ENCODE measurements at regions of chr9 and their contacts with region 1.

Region 1: DNA sequence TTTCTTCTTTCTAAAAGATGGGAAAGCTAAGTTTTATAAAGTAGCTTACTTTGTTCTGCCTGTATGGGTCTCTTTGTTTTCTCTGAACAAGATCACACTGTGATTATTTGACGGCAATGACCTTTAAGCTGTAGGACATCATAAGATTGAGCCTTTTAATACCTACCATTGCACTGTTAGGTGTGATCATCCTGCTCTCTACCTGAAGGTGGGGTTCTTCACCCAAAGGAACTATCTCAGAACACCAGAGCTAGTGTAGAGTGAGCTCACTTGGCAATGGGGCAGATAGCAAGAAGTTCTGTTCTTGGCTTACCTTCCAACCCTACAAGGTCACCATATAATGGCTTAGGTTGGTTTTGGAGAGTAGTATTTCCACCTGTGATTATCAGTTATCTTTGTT is 200.2 kb downstream of the SPATA31D1 start:
- DNase-seq: peak; percentile 14
- H3K4me3 ChIP-seq: no peak overlapping the region
- H3K27ac ChIP-seq: no peak overlapping the region
- H3K4me1 ChIP-seq: no peaks in the 10 kb centered on the region
- H3K27me3 ChIP-seq: no peaks in the 10 kb centered on the region
- CTCF ChIP-seq: peak; percentile 25 to 45

Region 2: DNA sequence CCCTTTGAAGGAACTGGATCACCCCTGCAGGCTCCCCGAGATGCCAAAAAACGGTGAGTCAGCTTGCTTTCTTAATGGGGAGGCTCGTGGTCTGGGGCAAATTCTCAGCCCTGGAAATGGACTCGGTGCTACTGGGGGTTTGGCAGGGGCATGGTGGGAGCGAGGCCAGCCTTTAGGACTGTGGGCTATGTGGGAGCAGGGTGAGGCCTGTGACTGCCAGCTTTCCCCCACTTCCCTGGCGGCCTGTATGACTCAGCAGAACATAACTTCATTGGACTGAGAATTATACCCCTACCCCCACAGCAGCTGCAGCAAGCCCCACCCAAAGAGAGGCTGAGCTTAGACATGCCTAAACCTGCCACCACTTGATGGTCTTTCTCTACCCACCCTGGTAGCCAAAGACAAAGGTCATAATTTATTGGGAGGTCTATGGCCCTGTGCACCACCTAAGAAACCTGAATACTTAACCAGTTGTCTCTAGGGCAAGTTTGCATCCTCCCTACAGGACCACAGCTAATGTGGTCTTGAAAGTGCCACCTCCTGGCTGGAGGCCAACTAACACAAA is 824.8 kb before region 1 on chr9:
- CTCF ChIA-PET with region 1: no interaction called
- dilution Hi-C with region 1: no loop called
- in situ Hi-C with region 1: no loop called
- intact Hi-C with region 1: no loop called
- DNase-seq: no peak
- H3K4me3 ChIP-seq: no peak overlapping the region
- H3K27ac ChIP-seq: no peak overlapping the region
- H3K4me1 ChIP-seq: no peaks in the 10 kb centered on the region
- H3K27me3 ChIP-seq: no peaks in the 10 kb centered on the region
- CTCF ChIP-seq: no peak

Region 3: DNA sequence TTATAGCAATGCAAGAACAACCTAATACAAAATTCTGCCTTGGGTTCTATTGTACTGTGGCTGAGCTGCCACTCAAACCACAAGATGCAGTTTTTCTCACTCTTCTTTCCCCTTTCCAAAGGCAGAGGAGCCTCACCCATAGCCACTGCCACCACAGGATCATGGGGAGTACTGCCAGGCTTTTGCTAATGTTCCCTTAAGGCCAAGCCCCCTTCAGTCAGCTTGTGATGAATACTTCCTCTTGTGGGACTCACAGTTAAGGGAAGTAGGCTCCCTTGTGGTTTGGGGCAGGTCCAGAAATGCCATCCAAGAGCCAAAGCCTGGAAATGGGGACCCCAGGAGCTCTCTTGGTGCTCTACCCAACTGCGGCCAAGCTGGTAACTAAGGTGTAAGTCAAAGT is 58.5 kb after region 1 on chr9:
- CTCF ChIA-PET with region 1: no interaction called
- dilution Hi-C with region 1: no loop called
- in situ Hi-C with region 1: no loop called
- intact Hi-C with region 1: no loop called
- DNase-seq: no peak
- H3K4me3 ChIP-seq: no peak overlapping the region
- H3K27ac ChIP-seq: no peak overlapping the region
- H3K4me1 ChIP-seq: no peaks in the 10 kb centered on the region
- H3K27me3 ChIP-seq: no peaks in the 10 kb centered on the region
- CTCF ChIP-seq: no peak

Region 4: GRCh38 chr9:82295181-82295580 is 106.4 kb after region 1 on chr9:
- CTCF ChIA-PET with region 1: no interaction called
- dilution Hi-C with region 1: loop called (anchors 5 kb)
- in situ Hi-C with region 1: no loop called
- intact Hi-C with region 1: no loop called
- DNase-seq: no peak
- H3K4me3 ChIP-seq: no peak overlapping the region
- H3K27ac ChIP-seq: no peak overlapping the region
- H3K4me1 ChIP-seq: no peaks in the 10 kb centered on the region
- H3K27me3 ChIP-seq: no peaks in the 10 kb centered on the region
- CTCF ChIP-seq: no peak

Region 5: DNA sequence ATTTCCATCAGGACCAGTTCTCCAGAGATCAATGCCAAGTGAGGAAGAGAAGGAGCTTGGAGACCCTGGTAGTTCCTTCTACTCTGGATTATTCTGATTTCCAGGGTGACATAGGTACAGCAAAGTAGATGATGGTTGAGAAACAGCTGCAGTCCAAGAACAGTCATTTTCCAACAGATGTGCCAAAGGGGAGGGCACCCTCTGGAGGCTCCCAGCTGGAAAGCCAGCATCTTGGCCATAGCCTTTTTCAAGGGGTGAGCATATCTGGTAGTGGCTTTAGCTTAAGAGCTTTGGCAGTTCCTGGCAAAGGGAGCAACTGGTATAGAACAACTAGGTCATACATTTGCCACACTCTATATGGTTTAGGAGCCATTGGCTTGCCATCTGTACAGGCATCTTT is 381.4 kb after region 1 on chr9:
- CTCF ChIA-PET with region 1: no interaction called
- dilution Hi-C with region 1: no loop called
- in situ Hi-C with region 1: no loop called
- intact Hi-C with region 1: loop called (anchors 1 kb)
- DNase-seq: peak; percentile 6
- H3K4me3 ChIP-seq: no peak overlapping the region
- H3K27ac ChIP-seq: no peak overlapping the region
- H3K4me1 ChIP-seq: no peaks in the 10 kb centered on the region
- H3K27me3 ChIP-seq: no peaks in the 10 kb centered on the region
- CTCF ChIP-seq: peak; percentile 34 to 66

Region 6: DNA sequence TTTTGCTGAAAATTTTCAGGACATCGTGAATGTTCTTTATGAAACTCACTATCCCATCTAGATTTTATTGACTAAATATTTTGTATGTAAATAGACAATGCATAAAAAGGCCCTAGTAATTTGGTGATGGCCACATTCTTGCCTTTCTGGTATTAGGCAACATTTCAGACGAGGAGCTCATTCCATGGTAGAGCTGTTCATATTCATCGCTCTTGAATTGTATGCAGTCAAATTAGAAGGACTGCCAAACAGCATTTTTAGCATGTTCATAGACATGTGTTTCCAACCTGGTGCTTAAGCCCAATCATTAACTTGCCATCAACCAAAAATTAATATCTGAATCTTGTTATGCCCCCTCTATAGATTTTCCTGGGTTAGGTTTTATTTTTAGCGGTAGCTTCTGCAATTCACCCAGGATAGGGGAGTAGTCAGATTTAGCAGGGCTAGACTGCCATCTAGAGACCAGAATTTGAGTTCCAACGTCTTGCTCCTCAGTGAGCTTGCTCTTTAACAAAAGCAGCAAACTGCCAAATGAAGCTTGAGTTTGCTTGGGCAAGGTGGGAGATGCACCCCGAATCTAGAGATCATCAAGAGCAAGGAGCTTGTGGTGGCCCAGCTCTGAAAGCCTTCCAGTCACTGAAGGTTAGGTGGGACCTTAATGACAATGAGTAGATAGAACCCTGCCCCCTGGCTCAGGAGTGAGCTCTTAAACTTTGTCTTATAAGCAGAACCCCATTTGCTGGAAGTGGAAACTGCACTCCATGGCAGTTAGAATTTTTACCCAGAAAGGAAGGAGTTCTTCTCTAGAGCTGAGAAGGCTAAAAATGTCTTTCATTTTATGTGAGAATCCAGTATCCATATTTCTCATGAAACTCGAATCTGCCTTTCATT is 417.9 kb after region 1 on chr9:
- CTCF ChIA-PET with region 1: no interaction called
- dilution Hi-C with region 1: no loop called
- in situ Hi-C with region 1: no loop called
- intact Hi-C with region 1: loop called (anchors 1 kb)
- DNase-seq: peak; percentile 35
- H3K4me3 ChIP-seq: no peak overlapping the region
- H3K27ac ChIP-seq: no peak overlapping the region
- H3K4me1 ChIP-seq: no peaks in the 10 kb centered on the region
- H3K27me3 ChIP-seq: no peaks in the 10 kb centered on the region
- CTCF ChIP-seq: peak; percentile 52 to 66

Region 7: DNA sequence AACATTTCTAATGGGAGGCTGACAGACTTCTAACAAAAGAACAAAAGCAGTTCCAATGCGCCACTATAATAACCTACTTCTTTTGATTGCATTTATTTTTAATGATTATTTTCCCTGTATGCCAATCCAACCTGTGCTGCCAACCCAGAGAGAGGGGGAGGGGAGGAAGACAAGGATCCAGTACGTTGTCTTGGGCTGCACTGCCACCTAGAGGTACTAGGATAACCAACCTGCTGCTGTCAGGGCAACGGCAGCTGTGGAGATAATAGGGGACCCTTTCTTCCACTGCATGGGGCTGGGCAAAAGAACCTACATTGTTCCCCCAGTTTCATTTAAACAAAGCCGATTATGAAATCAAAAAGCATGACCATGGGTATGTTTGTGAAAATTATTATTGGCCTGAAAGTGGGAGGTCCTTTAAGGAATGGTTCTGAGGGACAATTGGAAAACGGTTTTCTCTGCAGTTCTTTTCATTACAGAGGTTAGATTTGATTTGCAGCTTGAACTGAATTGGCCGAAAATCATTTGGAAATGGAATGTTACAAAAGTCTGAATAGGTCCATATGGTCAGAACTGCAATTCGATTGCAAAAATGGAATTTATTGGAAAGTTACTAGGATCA is 772.8 kb after region 1 on chr9:
- CTCF ChIA-PET with region 1: no interaction called
- dilution Hi-C with region 1: no loop called
- in situ Hi-C with region 1: no loop called
- intact Hi-C with region 1: loop called (anchors 1 kb)
- DNase-seq: peak; percentile 68
- H3K4me3 ChIP-seq: no peak overlapping the region
- H3K27ac ChIP-seq: no peak overlapping the region
- H3K4me1 ChIP-seq: no peaks in the 10 kb centered on the region
- H3K27me3 ChIP-seq: no peaks in the 10 kb centered on the region
- CTCF ChIP-seq: peak; percentile 74 to 91